Activated naive CD8-positive, alpha-beta T cell treated with anti-CD3 and anti-CD28 coated beads, Interleukin-2, amount 10 ng/mL, durations not matched to agents 7 days and 5 days (primary cell): ENCODE measurements at regions of chr17 and their contacts with region 1.

Region 1: DNA sequence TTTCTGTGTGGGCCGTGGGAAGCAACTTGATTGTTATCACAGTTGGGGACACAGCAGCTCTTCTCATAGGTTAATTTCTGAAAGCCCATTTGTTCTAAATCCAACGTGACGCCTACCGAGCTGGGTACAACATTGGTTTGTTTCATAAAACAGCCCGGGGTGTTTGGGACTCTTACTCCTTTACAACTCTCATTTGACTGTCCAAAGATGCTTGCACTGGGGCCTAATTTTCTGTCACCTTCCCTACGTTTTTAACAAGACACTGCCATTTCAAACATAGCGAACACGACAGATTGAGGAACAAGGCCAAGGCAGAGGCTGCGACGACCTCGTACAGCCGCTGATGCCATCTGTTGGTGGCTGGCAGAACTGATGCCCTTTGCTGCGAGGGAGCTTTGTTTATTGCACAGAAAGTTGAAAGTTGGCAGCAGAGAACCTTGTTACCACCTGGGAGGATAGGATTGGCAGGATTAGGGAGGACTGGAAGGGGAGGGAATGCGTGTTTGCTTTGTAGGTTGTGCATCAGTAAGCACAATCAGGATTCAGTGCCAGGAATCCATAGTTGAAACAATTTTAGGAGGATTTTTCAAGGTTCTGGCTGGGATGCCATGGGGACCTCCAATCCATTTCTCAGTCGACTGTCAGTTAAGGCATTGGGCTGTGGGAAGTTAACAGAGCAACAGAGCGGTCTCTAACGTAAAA is 98.3 kb downstream of the PITPNC1 start:
- DNase-seq: peak; percentile 81
- ATAC-seq: peak; percentile 69
- H3K4me3 Mint-ChIP-seq: peak overlapping the region; percentile 74
- H3K27ac Mint-ChIP-seq: peak overlapping the region; percentile 94
- H3K4me1 Mint-ChIP-seq: peaks cover 61% of the 10 kb centered on the region
- H3K27me3 Mint-ChIP-seq: no peaks in the 10 kb centered on the region

Region 2: DNA sequence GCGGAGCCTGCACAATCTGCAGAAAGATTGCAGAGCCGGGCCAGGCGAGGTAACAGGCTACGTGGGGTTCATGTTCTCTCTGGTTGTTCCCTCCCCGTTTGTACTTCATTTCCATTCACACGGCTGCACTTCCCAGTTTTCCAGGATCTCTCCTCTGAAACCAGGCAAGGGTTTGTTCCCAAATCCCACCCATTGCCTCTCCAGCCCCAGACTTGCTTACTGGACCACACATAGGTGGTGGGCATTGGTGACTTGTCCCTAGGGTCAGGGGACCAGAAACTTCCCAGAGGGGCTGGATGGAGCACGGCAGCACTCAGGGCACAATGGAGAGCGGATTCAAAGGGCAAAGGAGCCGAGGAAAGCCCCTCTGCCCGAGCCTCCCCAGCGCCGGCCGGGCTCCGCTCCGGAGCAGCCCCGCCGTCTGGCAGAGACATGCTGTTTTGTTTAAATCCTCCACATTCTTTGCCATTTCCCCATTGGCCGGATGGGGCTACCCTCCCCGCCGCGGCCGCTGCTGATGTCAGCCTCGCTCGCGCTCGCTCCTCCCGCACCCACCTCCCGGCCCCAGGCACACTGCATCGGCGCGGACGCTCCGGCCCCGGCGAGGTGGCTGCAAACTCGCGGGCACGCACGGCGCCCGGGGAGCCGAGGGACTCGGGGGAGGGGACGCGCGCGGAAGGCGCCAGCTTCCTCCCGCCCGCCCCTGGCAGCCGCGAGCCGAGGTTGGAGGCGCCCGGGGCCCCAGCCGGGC is 98.5 kb before region 1 on chr17 and contains the start of gene PITPNC1:
- POLR2A ChIA-PET with region 1: interaction called, 120 read pairs
- DNase-seq: peak; percentile 90
- ATAC-seq: peak; percentile 78
- H3K4me3 Mint-ChIP-seq: peak within 1 kb of the TSS; percentile 93
- H3K27ac Mint-ChIP-seq: peak within 1 kb of the TSS; percentile 90
- H3K4me1 Mint-ChIP-seq: peaks cover 39% of the 10 kb centered on the region
- H3K27me3 Mint-ChIP-seq: no peaks in the 10 kb centered on the region
- total RNA-seq, gene PITPNC1: 100 to 104 TPM

Region 3: GRCh38 chr17:67390646-67391384 is 84.6 kb before region 1 on chr17:
- POLR2A ChIA-PET with region 1: interaction called, 70 read pairs
- DNase-seq: peak; percentile 68
- ATAC-seq: peak; percentile 92
- H3K4me3 Mint-ChIP-seq: peak overlapping the region; percentile 88
- H3K27ac Mint-ChIP-seq: peak overlapping the region; percentile 92
- H3K4me1 Mint-ChIP-seq: peaks cover 55% of the 10 kb centered on the region
- H3K27me3 Mint-ChIP-seq: no peaks in the 10 kb centered on the region

Region 4: DNA sequence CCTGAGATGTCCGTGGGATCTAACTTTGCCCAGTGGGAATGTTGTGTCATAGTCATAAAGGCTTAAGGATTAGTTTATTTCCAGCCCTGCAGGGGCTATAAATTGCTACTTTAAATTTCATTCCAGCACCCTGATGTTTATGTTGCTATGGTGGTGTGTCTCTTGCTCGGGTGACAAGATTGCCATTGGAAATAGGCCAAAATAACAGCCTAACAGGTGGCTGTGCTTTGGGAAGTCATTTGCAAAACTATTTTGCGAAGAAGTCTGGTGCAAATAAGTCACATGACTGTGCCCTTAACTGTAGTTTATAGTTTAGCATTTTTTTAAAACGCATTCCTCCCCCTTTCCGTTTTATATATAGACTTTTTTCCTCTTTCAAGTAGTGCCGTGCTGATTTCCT is 75.2 kb before region 1 on chr17:
- POLR2A ChIA-PET with region 1: interaction called, 15 read pairs
- DNase-seq: no peak
- ATAC-seq: peak; percentile 3
- H3K4me3 Mint-ChIP-seq: peak overlapping the region; percentile 71
- H3K27ac Mint-ChIP-seq: peak overlapping the region; percentile 87
- H3K4me1 Mint-ChIP-seq: peaks cover 57% of the 10 kb centered on the region
- H3K27me3 Mint-ChIP-seq: no peaks in the 10 kb centered on the region

Region 5: DNA sequence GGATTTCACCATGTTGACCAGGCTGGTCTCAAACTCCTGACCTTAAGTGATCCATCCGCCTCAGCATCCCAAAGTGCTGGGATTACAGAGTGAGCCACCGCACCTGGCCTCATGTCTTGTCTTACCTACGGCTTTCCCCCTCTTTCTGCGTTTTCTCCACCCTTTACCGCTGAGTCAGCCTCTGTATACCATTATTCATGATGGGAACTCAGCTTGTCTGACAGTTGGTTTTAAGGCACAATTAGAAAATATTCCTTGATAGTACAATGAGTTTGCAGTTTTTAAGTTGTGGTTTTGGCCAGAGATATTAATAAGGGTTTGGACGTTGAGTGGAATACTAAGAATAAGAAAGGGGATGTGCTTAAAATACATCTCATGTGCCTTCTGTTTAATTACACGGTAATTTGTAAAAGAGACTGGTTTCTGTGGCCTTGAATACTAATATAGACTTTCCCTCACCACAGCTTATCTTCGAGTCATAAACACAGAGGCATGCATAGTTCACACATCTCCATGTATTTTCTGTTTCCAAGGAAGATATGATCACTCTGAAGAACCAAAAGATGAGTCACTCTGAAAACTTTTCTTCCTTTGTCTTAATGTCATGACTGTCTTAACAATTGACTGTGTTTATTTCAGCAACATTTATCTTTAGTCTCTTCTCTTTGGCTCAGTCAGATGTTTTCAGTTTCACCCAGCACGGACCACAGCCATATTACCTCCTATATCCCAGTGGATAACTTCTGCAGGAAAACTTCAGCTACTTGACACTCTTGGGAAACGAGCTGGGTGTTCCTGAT is 43.9 kb before region 1 on chr17:
- POLR2A ChIA-PET with region 1: interaction called, 26 read pairs
- DNase-seq: no peak
- ATAC-seq: peak; percentile 19
- H3K4me3 Mint-ChIP-seq: peak overlapping the region; percentile 23
- H3K27ac Mint-ChIP-seq: peak overlapping the region; percentile 37
- H3K4me1 Mint-ChIP-seq: peaks cover 54% of the 10 kb centered on the region
- H3K27me3 Mint-ChIP-seq: no peaks in the 10 kb centered on the region

Region 6: GRCh38 chr17:67452681-67453554 is 22.5 kb before region 1 on chr17:
- POLR2A ChIA-PET with region 1: interaction called, 65 read pairs
- DNase-seq: peak; percentile 54
- ATAC-seq: peak; percentile 85
- H3K4me3 Mint-ChIP-seq: peak overlapping the region; percentile 78
- H3K27ac Mint-ChIP-seq: peak overlapping the region; percentile 97
- H3K4me1 Mint-ChIP-seq: peaks cover 64% of the 10 kb centered on the region
- H3K27me3 Mint-ChIP-seq: no peaks in the 10 kb centered on the region

Region 7: DNA sequence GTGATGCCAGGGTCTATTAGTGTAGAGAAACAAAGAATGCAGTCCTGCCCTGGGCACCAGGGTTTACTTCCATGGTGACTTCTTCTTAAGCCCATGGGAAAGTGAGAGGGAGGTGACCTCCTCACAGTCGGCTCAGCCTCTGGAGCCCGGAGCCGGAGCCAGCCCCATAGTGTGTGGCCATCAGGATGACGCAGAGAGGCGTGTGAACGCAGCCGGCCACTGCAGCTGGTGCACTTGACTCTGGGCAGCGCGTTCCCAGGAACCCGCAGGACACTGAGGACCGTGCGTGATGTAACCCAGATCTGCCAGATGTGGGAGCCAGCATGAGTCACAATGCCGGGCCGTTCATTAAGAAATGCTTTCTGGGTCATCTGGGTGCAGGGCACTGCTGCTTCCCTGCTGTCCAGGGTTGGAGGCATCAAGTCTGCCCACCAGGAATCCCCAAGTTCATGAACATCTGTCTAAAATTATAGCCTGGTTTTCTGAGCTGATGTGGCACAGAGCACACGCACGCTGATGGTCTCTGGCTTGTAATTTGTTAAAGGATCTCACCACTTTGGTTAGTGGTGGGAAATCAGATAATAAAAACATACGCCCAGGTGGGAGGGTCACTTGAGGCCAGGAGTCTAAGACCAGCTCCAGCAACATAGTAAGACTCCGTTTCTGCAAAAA is 15.8 kb after region 1 on chr17:
- POLR2A ChIA-PET with region 1: no interaction called
- DNase-seq: no peak
- ATAC-seq: no peak
- H3K4me3 Mint-ChIP-seq: no peak overlapping the region
- H3K27ac Mint-ChIP-seq: no peak overlapping the region
- H3K4me1 Mint-ChIP-seq: peaks cover 28% of the 10 kb centered on the region
- H3K27me3 Mint-ChIP-seq: no peaks in the 10 kb centered on the region

Region 8: DNA sequence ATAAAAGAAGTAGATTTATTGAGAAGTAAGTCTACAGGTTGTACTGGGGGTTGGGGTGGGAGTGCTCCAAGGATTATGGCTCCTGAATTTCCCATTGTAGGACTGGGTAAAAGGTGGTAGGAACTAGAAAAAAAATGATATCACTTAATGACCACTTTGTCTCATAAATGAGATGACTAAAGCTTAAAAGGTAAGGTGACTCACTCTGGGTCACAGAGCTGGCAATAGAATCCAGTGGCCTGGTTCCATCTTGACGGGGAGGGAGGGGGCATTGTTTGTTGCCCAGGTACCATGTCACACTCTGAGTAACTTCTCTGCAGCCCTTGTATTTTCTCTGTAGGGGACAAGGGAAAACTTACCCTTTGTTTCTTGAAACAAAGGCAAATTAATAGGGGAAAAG is 27.8 kb after region 1 on chr17:
- POLR2A ChIA-PET with region 1: no interaction called
- DNase-seq: no peak
- ATAC-seq: no peak
- H3K4me3 Mint-ChIP-seq: no peak overlapping the region
- H3K27ac Mint-ChIP-seq: no peak overlapping the region
- H3K4me1 Mint-ChIP-seq: peaks cover 28% of the 10 kb centered on the region
- H3K27me3 Mint-ChIP-seq: no peaks in the 10 kb centered on the region